ENCODE measurements at regions of chr1 and their contacts with region 1.

Region 1: DNA sequence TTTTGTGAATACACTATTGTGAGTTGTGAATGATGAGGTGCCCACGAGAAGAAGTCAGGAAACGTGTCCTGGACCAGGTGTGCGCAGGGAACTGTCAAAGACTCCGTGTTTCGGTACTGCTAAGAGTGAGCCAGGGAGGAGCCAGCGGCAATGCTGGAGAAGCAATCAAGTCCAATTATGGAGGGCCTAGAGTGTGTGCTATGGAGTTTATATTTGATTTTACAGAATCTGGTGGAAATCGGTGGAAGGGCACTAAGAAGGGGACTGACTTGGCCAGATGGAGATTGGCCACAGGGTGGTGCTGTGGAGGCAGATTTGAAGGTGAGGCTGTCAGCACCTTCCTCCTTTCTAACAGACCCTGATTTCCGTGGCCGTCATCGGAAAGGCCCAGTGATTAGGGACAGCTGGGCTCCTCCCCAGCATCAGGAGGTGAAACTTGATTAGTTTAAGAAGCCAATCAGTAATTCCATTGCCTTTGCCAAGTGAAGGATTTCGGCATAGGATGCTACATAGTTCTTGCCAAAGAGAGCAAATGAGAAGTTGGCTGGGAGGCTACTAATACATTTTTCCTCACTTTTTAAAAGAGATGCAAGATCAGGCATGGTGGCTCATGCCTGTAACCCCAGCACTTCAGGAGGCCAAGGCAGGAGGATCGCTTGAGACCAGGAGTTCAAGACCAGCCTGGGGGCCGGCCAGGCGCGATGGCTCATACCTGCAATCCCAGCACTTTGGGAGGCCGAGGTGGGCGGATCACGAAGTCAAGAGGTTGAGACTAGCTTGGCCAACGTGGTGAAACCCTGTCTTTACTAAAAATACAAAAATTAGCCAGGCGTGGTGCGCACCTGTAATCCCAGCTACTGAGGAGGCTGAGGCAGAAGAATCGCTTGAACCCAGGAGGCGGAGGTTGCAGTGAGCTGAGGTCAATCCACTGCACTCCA is 7.0 kb downstream of the PTCH2 start:
- ATAC-seq: peak; percentile 21 to 93 (median 89)
- H3K4me3 ChIP-seq: no peak overlapping the region
- H3K27ac ChIP-seq: no peak overlapping the region
- H3K4me1 ChIP-seq: peaks cover 0 to 6% of the 10 kb centered on the region in 2 donors

Region 2: GRCh38 chr1:44739361-44740178 is 96.4 kb before region 1 on chr1 and contains the start of gene KIF2C:
- in situ Hi-C with region 1: no loop called
- ATAC-seq: peak; percentile 98 to 100 (median 99)
- H3K4me3 ChIP-seq: peak within 1 kb of the TSS; percentile 41 to 54 (median 50)
- H3K27ac ChIP-seq: peak within 1 kb of the TSS; percentile 37 to 51
- H3K4me1 ChIP-seq: peaks cover 3 to 10% of the 10 kb centered on the region in 2 donors
- total RNA-seq, gene KIF2C: 0.61 to 92.3 (median 4.9) TPM

Region 3: DNA sequence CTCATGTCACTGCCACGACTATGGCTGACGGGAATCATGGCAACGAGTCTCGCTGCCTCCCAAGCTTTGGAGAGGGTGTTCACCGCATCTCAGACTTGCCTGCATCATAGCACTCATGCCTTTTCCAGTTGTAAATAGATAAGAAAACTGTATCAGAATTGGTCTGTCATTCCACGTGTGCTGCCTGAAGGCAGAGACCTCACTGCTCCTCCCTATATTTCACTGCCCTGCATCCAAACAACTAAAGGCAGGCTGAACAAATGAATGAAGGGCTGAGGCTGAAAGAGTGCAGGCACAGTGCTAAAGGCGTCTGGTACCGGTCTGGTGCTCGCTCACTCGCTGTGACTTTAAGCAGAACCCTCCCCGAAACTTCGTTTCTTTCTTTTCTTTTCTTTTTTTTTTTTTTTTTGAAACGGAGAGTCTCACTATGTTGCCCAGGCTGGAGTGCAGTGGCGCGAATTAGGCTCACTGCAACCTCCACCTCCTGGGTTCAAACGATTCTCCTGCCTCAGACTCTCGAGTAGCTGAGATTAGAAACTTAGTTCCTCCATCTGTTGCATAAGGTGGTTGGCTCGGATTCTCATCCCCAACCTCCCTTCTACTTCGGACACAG is 149.8 kb after region 1 on chr1:
- in situ Hi-C with region 1: loop called in 2 of 9 experiments (anchors 10 to 25 kb)
- ATAC-seq: peak in 5 of 8 experiments; percentile 0 to 16 (median 2)
- H3K4me3 ChIP-seq: peak overlapping the region; percentile 54 to 93 (median 65)
- H3K27ac ChIP-seq: peak overlapping the region; percentile 5 to 72
- H3K4me1 ChIP-seq: peaks cover 8 to 12% of the 10 kb centered on the region in 2 donors

Region 4: DNA sequence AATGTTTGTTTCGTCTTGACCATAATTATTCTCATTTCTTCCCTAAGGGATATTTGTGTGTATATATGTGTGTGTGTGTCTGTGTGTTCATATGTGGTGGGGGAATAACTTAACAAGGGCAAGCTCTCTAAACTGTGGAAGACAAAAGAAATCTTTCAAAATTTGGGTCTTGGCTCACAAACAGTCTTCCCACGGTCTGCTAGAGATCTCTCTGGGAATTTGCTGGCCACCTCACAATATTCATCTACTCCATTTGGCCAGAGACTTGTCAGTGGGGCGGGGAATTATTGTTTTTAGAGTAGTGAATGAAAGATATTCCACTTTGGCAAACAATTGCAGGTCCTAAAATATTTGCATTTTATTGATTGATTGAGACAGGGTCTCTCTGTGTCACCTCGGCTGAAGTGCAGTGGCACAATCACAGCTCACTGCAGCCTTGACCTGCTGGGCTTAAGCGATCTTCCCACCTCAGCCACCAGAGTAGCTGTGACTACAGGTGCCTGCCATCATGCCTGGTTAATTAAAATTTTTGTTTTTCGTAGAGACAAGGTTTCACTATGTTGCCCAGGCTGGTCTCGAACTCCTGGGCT is 158.4 kb after region 1 on chr1:
- in situ Hi-C with region 1: loop called in 2 of 9 experiments (anchors 10 to 25 kb)
- ATAC-seq: no peak
- H3K4me3 ChIP-seq: no peak overlapping the region
- H3K27ac ChIP-seq: no peak overlapping the region
- H3K4me1 ChIP-seq: peaks cover 0 to 6% of the 10 kb centered on the region in 2 donors

Region 5: GRCh38 chr1:45011837-45012638 is 176.0 kb after region 1 on chr1 and contains the start of gene UROD:
- in situ Hi-C with region 1: loop called in 2 of 9 experiments (anchors 10 to 25 kb)
- ATAC-seq: peak; percentile 56 to 76 (median 73)
- H3K4me3 ChIP-seq: peak within 1 kb of the TSS; percentile 92 to 100 (median 100)
- H3K27ac ChIP-seq: peak within 1 kb of the TSS; percentile 39 to 51
- H3K4me1 ChIP-seq: peaks cover 14 to 26% of the 10 kb centered on the region in 2 donors
- total RNA-seq, gene UROD: 60.9 to 229 (median 99.3) TPM

Region 6: GRCh38 chr1:45303582-45304310 is 467.7 kb after region 1 on chr1:
- in situ Hi-C with region 1: loop called in 1 of 9 experiments (anchors 25 kb)
- ATAC-seq: peak; percentile 88 to 93 (median 90)
- H3K4me3 ChIP-seq: peak overlapping the region; percentile 60 to 83 (median 71)
- H3K27ac ChIP-seq: peak overlapping the region; percentile 81 to 90
- H3K4me1 ChIP-seq: peaks cover 10 to 22% of the 10 kb centered on the region in 2 donors

Measured in motor neuron (in vitro differentiated cells).